ENCODE measurements at regions of chr2 and their contacts with region 1.

Region 1: DNA sequence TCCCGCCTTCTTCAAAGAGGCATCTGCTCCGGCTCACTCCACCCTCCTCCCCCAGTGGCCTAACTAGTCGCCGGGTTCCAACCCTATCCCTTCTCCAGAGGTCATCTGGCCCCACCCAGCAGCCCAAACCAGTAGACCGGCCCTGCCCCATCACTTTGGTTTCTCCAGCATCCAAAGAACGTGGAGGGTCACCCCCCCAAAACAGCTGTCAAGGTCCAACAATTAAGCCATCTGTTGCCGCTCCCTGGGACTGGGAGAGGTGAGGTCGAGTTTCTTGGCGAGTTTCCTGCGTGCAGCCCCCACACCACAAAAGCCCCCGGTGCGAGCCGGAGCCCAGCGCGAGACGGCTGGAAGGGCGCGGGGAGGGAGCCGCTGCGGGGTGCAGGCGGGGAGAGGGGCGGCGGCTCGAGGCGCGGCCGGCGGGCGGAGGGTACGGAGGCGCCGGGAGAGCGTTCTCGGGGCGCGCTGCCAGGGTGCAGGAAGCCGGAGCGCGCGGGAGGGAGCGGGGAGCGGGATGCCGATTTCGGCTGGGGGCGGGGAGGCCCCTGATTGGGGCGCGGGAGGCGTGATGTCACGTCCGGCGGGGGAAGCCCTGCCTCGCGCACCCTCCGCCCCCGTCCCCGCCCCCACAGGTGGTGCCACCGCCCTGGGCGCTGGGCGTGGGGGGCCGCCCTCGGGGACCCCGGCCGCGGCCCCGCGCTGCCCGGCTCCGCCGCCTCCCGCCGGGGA is 571 bp upstream of the GPC1 start:
- DNase-seq: peak; percentile 97
- H3K4me3 ChIP-seq: peak overlapping the region; percentile 94
- H3K27ac ChIP-seq: peak overlapping the region; percentile 89
- H3K4me1 ChIP-seq: peaks cover 10% of the 10 kb centered on the region
- H3K27me3 ChIP-seq: no peaks in the 10 kb centered on the region

Region 2: DNA sequence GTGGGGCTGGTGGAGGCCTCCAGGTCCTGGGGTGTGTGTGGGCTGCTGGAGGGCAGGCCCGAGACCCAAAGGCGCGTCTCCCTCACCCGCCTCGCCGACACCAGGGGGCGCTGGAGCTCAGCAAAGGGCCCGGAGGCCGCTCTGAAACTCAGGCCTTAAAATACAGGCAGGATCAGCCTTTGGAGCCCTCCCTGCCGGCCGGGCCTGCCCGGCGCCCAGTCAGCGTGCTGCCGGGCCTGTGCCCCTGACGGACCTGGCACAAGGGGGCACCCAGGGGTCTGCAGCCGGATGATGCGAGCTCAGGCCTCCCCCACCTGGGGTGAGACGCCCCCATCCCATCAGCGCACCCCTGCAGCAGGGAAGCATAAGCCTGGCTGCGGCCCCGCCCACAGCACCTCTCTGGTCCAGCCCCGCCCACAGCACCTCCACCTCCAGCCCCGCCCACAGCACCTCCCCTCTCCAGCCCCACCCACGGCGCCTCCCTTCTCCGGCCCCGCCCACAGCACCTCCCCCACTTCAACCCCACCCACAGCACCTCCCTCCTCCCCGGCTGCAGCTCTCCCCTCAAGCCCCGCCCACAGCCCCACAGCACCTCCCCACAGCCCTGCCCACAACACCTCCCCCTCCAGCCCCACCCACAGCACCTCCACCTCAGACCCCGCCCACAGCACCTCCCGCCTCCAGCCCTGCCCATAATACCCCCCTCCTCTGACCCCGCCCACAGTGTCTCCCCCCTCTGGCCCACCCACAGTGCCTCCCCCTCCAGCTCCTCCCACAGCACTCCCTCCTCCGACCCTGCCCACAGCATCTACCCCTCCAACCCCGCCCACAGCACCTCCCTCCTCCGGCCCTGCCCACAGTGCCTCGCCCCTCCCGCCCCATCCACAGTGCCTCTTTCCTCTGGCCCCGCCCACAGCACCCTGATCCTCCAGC is 201.7 kb before region 1 on chr2:
- in situ Hi-C with region 1: loop called (anchors 5 kb)
- DNase-seq: peak; percentile 88
- H3K4me3 ChIP-seq: peak overlapping the region; percentile 64
- H3K27ac ChIP-seq: no peak overlapping the region
- H3K4me1 ChIP-seq: peaks cover 8% of the 10 kb centered on the region
- H3K27me3 ChIP-seq: no peaks in the 10 kb centered on the region

Region 3: DNA sequence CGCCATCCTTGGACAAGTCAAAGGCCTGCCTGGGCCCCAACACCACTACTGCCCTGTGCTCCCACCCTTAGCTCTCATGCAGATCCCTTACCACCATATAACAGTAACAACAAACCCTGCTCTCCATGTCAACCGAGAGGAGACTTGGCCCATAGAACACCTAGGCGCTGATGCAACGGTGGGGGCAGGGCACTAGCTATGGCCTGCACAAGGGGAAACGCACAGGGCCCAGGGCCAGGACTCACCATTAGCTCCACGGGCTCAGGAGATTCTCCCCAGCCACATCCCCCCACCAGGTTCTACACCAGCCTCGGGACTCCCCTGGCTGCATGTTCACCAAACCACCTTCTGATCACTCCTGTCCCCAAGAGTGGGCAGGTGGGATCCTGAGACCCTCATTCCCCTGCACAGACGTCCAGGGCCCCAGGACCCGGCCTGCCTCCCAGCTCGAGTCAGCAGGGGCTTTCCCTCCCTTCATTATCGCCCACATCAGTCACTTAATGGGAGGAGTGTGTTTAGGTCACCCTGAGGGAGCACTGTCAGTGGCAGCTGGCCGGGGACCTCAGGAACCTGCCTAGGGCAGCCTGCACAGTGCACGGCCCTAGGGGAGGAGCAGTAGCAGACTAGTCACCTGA is 93.6 kb after region 1 on chr2:
- in situ Hi-C with region 1: no loop called
- DNase-seq: no peak
- H3K4me3 ChIP-seq: no peak overlapping the region
- H3K27ac ChIP-seq: no peak overlapping the region
- H3K4me1 ChIP-seq: no peaks in the 10 kb centered on the region
- H3K27me3 ChIP-seq: no peaks in the 10 kb centered on the region